Activated T-helper 1 cell treated with anti-CD3 and anti-CD28 coated beads, Interleukin-12 subunit alpha, Interleukin-12 subunit beta, Interleukin-2, Interleukin-4 antibody, amounts not matched to agents 30 ng/mL and 10 ng/mL and 1 ng/mL, durations not matched to agents 14 hours and 24 hours and 36 hours (primary cell): ENCODE measurements at regions of chrX and their contacts with region 1.

Region 1: GRCh38 chrX:78517124-78517523 is 142.0 kb downstream of the RTL3 start:
- DNase-seq: peak; percentile 56
- H3K4me3 Mint-ChIP-seq: peak overlapping the region; percentile 35
- H3K27ac Mint-ChIP-seq: peak overlapping the region; percentile 92
- H3K4me1 Mint-ChIP-seq: peaks cover 47% of the 10 kb centered on the region
- H3K27me3 Mint-ChIP-seq: no peaks in the 10 kb centered on the region

Region 2: DNA sequence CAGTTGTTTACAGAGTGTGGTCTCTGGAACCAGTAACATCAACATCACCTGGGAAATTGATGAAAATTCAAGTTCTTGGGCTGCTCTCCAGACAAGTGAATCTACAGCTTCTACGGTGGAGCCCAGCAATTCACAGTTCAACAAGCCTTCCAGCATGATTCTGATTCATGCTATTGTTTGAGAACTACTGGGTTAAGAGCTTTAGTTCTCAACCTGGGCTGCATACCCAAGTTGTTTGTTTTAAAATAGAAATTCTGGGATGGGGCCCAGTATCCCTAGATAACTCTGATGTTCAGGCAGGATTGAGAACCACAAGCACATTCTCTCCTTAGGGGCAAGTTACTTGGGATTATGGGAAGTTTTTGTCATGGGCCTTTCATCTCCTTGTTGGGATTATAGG is 451.0 kb before region 1 on chrX:
- intact Hi-C with region 1: loop called (anchors 1 kb)
- DNase-seq: no peak
- H3K4me3 Mint-ChIP-seq: no peak overlapping the region
- H3K27ac Mint-ChIP-seq: no peak overlapping the region
- H3K4me1 Mint-ChIP-seq: peaks cover 30% of the 10 kb centered on the region
- H3K27me3 Mint-ChIP-seq: no peaks in the 10 kb centered on the region

Region 3: DNA sequence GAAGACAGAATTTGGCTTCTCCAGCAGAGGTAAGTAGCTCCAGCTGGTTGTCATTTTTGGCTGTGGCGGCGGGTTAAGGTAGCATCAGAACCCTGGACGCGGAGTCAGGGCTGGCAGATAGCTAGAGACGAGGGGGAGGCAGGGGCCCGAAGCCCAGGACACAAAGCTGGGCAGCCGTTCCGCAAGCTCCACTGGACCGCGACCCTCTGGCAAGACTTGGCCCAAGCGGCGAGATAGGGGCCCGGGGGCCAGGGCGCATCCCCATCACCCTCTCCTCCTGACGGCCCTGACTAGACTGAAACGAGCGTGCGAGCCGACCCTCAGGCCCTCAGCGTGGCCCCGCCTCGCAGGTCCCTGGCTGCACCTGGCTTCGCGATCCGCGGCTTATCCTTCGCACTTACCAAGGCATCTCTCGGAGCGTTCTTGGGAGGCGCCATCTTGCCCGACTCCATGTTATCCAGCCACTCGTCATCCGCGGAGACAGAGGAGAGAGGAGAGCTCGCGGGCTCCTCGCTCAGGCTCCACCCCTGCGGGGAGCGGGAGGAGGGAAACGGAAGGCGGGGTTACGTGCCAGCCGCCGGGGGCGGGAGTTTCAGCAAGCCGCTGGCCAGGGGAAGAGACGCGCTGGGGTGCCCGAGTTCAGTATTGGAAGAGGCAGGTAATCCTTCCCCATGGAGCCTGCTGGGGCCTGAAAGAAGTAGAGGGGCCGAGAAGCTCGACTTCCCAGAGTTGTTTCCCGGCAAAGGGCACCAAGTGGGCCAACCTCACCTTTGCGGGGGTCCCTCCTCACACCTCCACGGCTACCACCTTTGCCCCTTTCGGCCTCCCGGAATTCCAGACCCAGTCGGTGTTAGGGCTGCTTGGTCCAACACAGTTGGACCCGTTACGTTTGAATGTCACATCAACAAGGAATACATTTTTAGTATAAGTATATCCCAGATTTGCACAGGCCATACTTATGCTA is 377.7 kb before region 1 on chrX and contains the start of gene TAF9B:
- intact Hi-C with region 1: loop called (anchors 5 kb)
- DNase-seq: peak; percentile 78
- H3K4me3 Mint-ChIP-seq: peak within 1 kb of the TSS; percentile 92
- H3K27ac Mint-ChIP-seq: peak within 1 kb of the TSS; percentile 86
- H3K4me1 Mint-ChIP-seq: no peaks in the 10 kb centered on the region
- H3K27me3 Mint-ChIP-seq: no peaks in the 10 kb centered on the region
- total RNA-seq, gene TAF9B: 14.9 and 15.0 TPM in 2 replicates

Region 4: DNA sequence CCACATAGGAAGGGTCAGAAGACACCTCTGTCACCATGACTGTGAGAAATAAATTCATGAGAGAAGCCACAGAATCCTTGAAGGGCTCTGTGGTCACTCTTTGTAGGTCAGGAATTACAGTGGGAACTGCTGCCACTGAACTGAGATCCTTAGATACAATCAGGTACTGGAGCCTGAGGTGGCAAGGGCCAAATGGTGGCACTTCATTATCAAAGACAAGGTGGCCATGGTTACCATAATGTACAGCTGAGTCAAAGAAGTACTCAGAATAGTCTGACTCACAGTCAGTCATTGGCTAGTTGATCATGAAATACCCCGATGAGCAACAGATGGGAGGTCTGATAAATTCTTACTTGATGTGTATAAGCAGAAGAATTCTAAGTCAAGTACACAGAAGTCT is 10.1 kb after region 1 on chrX:
- intact Hi-C with region 1: loop called (anchors 1 kb)
- DNase-seq: no peak
- H3K4me3 Mint-ChIP-seq: no peak overlapping the region
- H3K27ac Mint-ChIP-seq: peak overlapping the region; percentile 48
- H3K4me1 Mint-ChIP-seq: peaks cover 12% of the 10 kb centered on the region
- H3K27me3 Mint-ChIP-seq: no peaks in the 10 kb centered on the region

Region 5: GRCh38 chrX:78573630-78574029 is 56.5 kb after region 1 on chrX:
- intact Hi-C with region 1: no loop called
- DNase-seq: no peak
- H3K4me3 Mint-ChIP-seq: no peak overlapping the region
- H3K27ac Mint-ChIP-seq: no peak overlapping the region
- H3K4me1 Mint-ChIP-seq: no peaks in the 10 kb centered on the region
- H3K27me3 Mint-ChIP-seq: no peaks in the 10 kb centered on the region

Region 6: DNA sequence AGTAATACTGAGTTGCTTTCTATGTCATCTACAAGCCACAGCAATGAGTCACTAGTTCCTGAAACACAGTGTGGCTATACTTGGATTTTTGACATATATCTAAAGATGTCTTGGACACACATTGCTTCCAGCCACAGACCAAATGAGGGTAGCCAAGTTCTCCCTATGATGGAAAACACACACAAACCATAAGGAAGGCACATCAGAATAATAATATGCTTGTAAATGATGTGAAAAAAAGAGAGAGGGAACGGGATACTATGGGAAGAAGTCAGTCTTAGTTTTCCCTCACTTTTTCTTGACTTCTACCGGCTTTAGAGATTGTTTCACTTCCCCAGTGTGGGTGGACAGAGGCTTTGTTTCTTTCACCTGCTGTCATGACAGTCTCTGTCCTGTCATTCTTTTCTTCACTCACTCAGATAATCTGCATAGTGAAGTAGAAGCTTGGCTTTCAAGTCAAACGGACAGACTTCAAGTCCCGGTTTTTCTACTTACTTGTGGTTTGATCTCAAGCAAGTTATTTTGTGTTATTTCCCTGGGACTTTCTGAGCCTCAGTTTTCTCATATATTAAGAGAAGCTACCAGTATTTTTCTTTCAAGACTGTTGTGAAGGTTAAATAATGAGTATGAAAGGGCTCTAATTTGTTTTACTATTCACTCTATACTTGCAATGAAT is 462.8 kb after region 1 on chrX:
- intact Hi-C with region 1: loop called (anchors 2 kb)
- DNase-seq: no peak
- H3K4me3 Mint-ChIP-seq: peak overlapping the region; percentile 67
- H3K27ac Mint-ChIP-seq: peak overlapping the region; percentile 100
- H3K4me1 Mint-ChIP-seq: peaks cover 35% of the 10 kb centered on the region
- H3K27me3 Mint-ChIP-seq: no peaks in the 10 kb centered on the region

Region 7: DNA sequence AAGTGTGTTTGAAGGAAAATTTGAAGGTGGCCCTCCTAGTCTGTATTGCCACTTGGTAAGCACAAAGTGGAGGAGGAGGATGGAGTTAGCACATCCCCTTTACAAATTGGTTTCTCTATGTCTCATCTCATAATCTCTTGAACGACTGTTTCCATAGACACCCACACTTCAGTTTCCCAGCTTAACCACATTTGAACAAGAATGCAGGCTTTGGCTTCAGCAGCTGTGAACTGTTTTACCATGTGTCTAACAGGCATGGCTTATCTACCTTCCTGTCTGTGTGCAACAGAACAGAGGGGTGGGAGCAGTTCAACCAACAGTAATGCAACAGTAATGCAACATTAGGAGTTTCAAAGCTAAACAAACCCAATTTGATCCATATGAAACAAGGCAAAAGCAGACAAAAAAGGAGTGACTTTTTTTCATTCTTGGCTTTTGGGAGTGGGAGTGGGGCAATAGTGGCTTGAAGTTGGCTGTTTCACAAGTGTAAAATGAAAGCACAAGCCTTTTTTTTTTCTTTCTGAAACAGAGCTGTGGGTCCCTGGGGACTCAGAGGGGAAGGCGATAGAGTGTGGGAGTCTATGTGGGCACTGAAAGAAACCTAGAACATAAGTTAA is 742.1 kb after region 1 on chrX:
- intact Hi-C with region 1: loop called (anchors 2 kb)
- DNase-seq: peak; percentile 57
- H3K4me3 Mint-ChIP-seq: peak overlapping the region; percentile 45
- H3K27ac Mint-ChIP-seq: peak overlapping the region; percentile 87
- H3K4me1 Mint-ChIP-seq: peaks cover 86% of the 10 kb centered on the region
- H3K27me3 Mint-ChIP-seq: no peaks in the 10 kb centered on the region